ENCODE measurements at regions of chr6 and their contacts with region 1.

Region 1: DNA sequence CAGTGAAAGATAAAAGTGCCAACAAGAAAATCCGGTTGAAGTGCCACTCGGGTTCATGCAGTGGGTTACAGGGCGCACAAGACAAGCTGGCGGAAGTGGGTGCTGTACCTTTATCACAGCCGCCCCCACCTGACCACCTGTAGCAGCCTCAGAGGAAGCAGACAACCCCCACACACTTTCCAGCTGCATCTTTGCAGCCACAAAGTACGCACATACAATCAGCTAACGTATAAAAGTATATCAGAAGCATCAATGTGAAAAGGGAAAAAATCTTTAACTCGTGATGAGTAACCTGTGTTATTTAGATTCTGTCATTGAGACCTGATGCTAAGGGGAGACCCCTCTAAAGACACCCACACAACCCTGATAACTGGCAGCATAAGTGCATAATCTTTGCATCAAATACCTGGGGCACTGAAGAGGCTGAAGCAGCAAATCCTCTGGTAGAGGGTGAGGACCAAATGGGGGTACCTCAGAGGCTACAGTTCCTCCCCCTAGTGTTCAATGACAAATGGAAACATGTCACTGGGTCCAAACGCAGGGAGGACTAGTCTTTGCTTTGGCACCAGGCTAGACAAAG is 22.1 kb downstream of the BACH2 start:
- DNase-seq: peak; percentile 77 to 97 (median 96)
- H3K4me3 ChIP-seq: peak overlapping the region; percentile 5
- H3K4me3 Mint-ChIP-seq: peak overlapping the region; percentile 53 to 81 (median 75)
- H3K27ac ChIP-seq: peak overlapping the region; percentile 21
- H3K27ac Mint-ChIP-seq: peak overlapping the region; percentile 93 to 100 (median 99)
- H3K4me1 ChIP-seq: peaks cover 81% of the 10 kb centered on the region
- H3K4me1 Mint-ChIP-seq: peaks cover 40 to 78% (median 75%) of the 10 kb centered on the region in 3 donors
- H3K27me3 ChIP-seq: no peaks in the 10 kb centered on the region
- H3K27me3 Mint-ChIP-seq: peaks cover 0 to 6% of the 10 kb centered on the region in 2 donors

Region 2: GRCh38 chr6:90285611-90286381 is 11.3 kb after region 1 on chr6:
- CTCF ChIA-PET with region 1: interaction called, 17 read pairs
- POLR2A ChIA-PET with region 1: interaction called, 14 read pairs
- DNase-seq: peak; percentile 21 to 80 (median 59)
- H3K4me3 ChIP-seq: peak overlapping the region; percentile 59
- H3K4me3 Mint-ChIP-seq: peak overlapping the region; percentile 78 to 91 (median 89)
- H3K27ac ChIP-seq: no peak overlapping the region
- H3K27ac Mint-ChIP-seq: peak overlapping the region; percentile 72 to 95 (median 86)
- H3K4me1 ChIP-seq: peaks cover 71% of the 10 kb centered on the region
- H3K4me1 Mint-ChIP-seq: peaks cover 54 to 86% (median 78%) of the 10 kb centered on the region in 3 donors
- H3K27me3 ChIP-seq: no peaks in the 10 kb centered on the region
- H3K27me3 Mint-ChIP-seq: peaks cover 0 to 1% of the 10 kb centered on the region in 2 donors

Region 3: DNA sequence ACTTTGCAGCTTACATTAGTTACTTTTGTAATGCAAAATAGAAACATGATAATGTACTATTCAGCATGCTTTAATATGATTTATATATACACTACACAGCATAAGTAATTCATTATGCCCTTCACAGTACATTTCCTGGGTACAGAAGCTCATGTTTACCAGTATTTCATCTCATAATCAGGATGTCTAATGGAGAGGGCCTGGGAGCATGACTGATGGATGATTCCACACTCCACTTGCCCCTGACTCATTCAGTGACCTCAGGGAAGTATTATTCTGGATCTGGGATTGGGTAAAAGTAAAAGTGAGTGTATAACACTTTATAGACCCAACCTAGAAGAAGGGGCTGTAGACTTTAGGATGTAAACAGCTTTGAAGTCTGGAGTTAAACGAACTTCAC is 53.5 kb after region 1 on chr6:
- CTCF ChIA-PET with region 1: no interaction called
- POLR2A ChIA-PET with region 1: no interaction called
- DNase-seq: no peak
- H3K4me3 ChIP-seq: no peak overlapping the region
- H3K4me3 Mint-ChIP-seq: no peak overlapping the region
- H3K27ac ChIP-seq: no peak overlapping the region
- H3K27ac Mint-ChIP-seq: no peak overlapping the region
- H3K4me1 ChIP-seq: no peaks in the 10 kb centered on the region
- H3K4me1 Mint-ChIP-seq: no peaks in the 10 kb centered on the region
- H3K27me3 ChIP-seq: no peaks in the 10 kb centered on the region
- H3K27me3 Mint-ChIP-seq: peaks cover 0 to 4% of the 10 kb centered on the region in 2 donors

Measured in CD8-positive, alpha-beta memory T cell (primary cell).